Gastrocnemius medialis (tissue), 4 donors: ENCODE measurements at regions of chr15 and their contacts with region 1.

Region 1: GRCh38 chr15:68875377-68876116 is 54.8 kb upstream of the SPESP1 start:
- DNase-seq: peak; percentile 77 to 84
- ATAC-seq: peak; percentile 92 to 96
- H3K4me3 ChIP-seq: peak overlapping the region; percentile 30 to 52 (median 42)
- H3K27ac ChIP-seq: no peak overlapping the region
- H3K4me1 ChIP-seq: peaks cover 0 to 5% of the 10 kb centered on the region in 2 donors
- H3K27me3 ChIP-seq: peaks cover 0 to 1% (median 0%) of the 10 kb centered on the region in 3 donors
- CTCF ChIP-seq: peak; percentile 86 to 94 (median 91)
- POLR2A ChIP-seq: no peak

Region 2: GRCh38 chr15:68550481-68551295 is 324.9 kb before region 1 on chr15:
- in situ Hi-C with region 1: loop called (anchors 5 to 10 kb)
- intact Hi-C with region 1: no loop called
- DNase-seq: peak; percentile 39 to 52
- ATAC-seq: peak; percentile 55 to 72
- H3K4me3 ChIP-seq: no peak overlapping the region
- H3K27ac ChIP-seq: no peak overlapping the region
- H3K4me1 ChIP-seq: no peaks in the 10 kb centered on the region
- H3K27me3 ChIP-seq: no peaks in the 10 kb centered on the region
- CTCF ChIP-seq: peak; percentile 61 to 93 (median 84)
- POLR2A ChIP-seq: no peak

Region 3: GRCh38 chr15:68559345-68560310 is 315.9 kb before region 1 on chr15:
- in situ Hi-C with region 1: loop called (anchors 5 to 10 kb)
- intact Hi-C with region 1: loop called (anchors 2 kb)
- DNase-seq: peak; percentile 33 to 47
- ATAC-seq: peak; percentile 70 to 88
- H3K4me3 ChIP-seq: peak overlapping the region; percentile 36 to 51 (median 44)
- H3K27ac ChIP-seq: no peak overlapping the region
- H3K4me1 ChIP-seq: peaks cover 0 to 4% of the 10 kb centered on the region in 2 donors
- H3K27me3 ChIP-seq: peaks cover 0 to 4% (median 3%) of the 10 kb centered on the region in 3 donors
- CTCF ChIP-seq: peak; percentile 84 to 98 (median 95)
- POLR2A ChIP-seq: no peak

Region 4: GRCh38 chr15:68730471-68730919 is 145.1 kb before region 1 on chr15:
- in situ Hi-C with region 1: loop called in 2 of 4 experiments (anchors 5 kb)
- intact Hi-C with region 1: loop called (anchors 1 kb)
- DNase-seq: peak in 1 of 2 donors; percentile 17
- ATAC-seq: peak in 1 of 2 donors; percentile 27
- H3K4me3 ChIP-seq: no peak overlapping the region
- H3K27ac ChIP-seq: peak overlapping the region; percentile 6 to 64 (median 34)
- H3K4me1 ChIP-seq: peaks cover 0 to 4% of the 10 kb centered on the region in 2 donors
- H3K27me3 ChIP-seq: no peaks in the 10 kb centered on the region
- CTCF ChIP-seq: peak; percentile 19 to 69 (median 56)
- POLR2A ChIP-seq: no peak

Region 5: GRCh38 chr15:68783226-68784058 is 92.1 kb before region 1 on chr15:
- in situ Hi-C with region 1: loop called (anchors 5 to 10 kb)
- intact Hi-C with region 1: loop called (anchors 1 kb)
- DNase-seq: peak in 1 of 2 donors; percentile 38
- ATAC-seq: peak; percentile 36 to 53
- H3K4me3 ChIP-seq: no peak overlapping the region
- H3K27ac ChIP-seq: no peak overlapping the region
- H3K4me1 ChIP-seq: peaks cover 0 to 7% of the 10 kb centered on the region in 2 donors
- H3K27me3 ChIP-seq: no peaks in the 10 kb centered on the region
- CTCF ChIP-seq: peak; percentile 63 to 87 (median 78)
- POLR2A ChIP-seq: no peak

Region 6: GRCh38 chr15:68829068-68829467 is 46.5 kb before region 1 on chr15:
- in situ Hi-C with region 1: no loop called
- intact Hi-C with region 1: loop called (anchors 5 kb)
- DNase-seq: no peak
- ATAC-seq: peak; percentile 60 to 62
- H3K4me3 ChIP-seq: no peak overlapping the region
- H3K27ac ChIP-seq: no peak overlapping the region
- H3K4me1 ChIP-seq: no peaks in the 10 kb centered on the region
- H3K27me3 ChIP-seq: peaks cover 0 to 8% (median 7%) of the 10 kb centered on the region in 3 donors
- CTCF ChIP-seq: peak; percentile 8 to 61 (median 47)
- POLR2A ChIP-seq: no peak